Right ventricle myocardium inferior (tissue), 1 donor: ENCODE measurements at regions of chr15 and their contacts with region 1.

Region 1: DNA sequence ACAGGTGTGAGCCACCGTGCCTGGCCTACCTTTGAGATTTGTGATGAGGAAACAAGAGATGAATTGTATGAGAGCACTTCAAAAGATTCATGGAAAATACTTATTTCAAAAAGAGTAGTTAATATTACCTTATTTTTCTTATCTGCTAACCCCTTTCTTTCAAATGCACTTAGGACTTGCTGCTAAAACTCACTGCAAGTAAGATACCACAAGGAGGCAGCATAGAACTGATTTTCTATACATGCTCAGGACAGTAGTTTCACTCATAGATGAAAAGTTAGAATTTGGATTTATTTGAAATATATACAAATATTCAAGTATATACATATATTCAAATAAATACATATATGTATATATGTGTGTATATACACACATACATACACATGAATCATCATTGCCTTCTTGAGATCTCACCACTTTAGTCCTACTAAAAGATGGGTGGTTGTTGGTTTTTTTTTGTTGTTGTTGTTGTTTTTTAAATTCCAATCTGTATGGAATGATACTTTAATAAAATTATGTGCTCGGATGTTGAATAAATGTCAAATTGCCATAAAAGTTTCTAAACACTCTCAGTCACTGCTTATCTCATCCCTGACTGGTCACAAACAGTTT is 2.4 kb downstream of the CCNDBP1 start:
- DNase-seq: no peak
- ATAC-seq: no peak

Region 2: GRCh38 chr15:43204016-43204901 is 16.6 kb after region 1 on chr15:
- intact Hi-C with region 1: loop called (anchors 1 kb)
- DNase-seq: peak; percentile 78
- ATAC-seq: peak; percentile 59